A673 (cell line): ENCODE measurements at regions of chr16 and their contacts with region 1.

Region 1: GRCh38 chr16:24504472-24505345 is 34.7 kb upstream of the RBBP6 start:
- DNase-seq: peak; percentile 90
- H3K4me3 ChIP-seq: peak overlapping the region; percentile 10
- H3K27ac ChIP-seq: peak overlapping the region; percentile 20
- H3K4me1 ChIP-seq: peaks cover 26% of the 10 kb centered on the region
- H3K27me3 ChIP-seq: no peaks in the 10 kb centered on the region
- CTCF ChIP-seq: peak; percentile 83

Region 2: DNA sequence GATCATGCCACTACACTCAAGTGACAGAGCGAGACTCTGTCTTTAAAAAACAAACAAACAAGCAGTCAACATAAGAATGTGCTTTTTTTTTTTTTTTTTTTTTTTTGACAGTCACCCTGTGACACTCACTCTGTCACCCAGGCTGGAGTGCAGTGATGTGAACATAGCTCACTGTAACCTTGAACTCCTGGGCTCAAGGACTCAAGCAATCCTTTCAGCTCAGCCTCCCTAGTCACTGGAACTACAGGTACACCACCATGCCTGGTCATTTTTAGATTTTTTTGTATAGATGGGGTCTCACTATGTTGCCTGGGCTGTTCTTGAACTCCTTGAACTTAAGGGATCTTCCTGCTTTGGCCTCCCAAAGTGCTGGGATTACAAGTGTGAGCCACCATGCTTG is 765.2 kb before region 1 on chr16:
- CTCF ChIA-PET with region 1: no interaction called
- POLR2A ChIA-PET with region 1: no interaction called
- intact Hi-C with region 1: loop called (anchors 5 kb)
- DNase-seq: no peak
- H3K4me3 ChIP-seq: no peak overlapping the region
- H3K27ac ChIP-seq: no peak overlapping the region
- H3K4me1 ChIP-seq: peaks cover 9% of the 10 kb centered on the region
- H3K27me3 ChIP-seq: no peaks in the 10 kb centered on the region
- CTCF ChIP-seq: no peak

Region 3: GRCh38 chr16:24041826-24042631 is 462.7 kb before region 1 on chr16:
- CTCF ChIA-PET with region 1: interaction called, 21 read pairs
- POLR2A ChIA-PET with region 1: no interaction called
- intact Hi-C with region 1: loop called (anchors 1 kb)
- DNase-seq: peak; percentile 87
- H3K4me3 ChIP-seq: no peak overlapping the region
- H3K27ac ChIP-seq: no peak overlapping the region
- H3K4me1 ChIP-seq: peaks cover 23% of the 10 kb centered on the region
- H3K27me3 ChIP-seq: no peaks in the 10 kb centered on the region
- CTCF ChIP-seq: peak; percentile 86

Region 4: GRCh38 chr16:24070851-24071250 is 433.9 kb before region 1 on chr16:
- CTCF ChIA-PET with region 1: interaction called, 16 read pairs
- POLR2A ChIA-PET with region 1: no interaction called
- intact Hi-C with region 1: no loop called
- DNase-seq: peak; percentile 89
- H3K4me3 ChIP-seq: no peak overlapping the region
- H3K27ac ChIP-seq: no peak overlapping the region
- H3K4me1 ChIP-seq: peaks cover 8% of the 10 kb centered on the region
- H3K27me3 ChIP-seq: no peaks in the 10 kb centered on the region
- CTCF ChIP-seq: peak; percentile 83

Region 5: GRCh38 chr16:24471561-24472350 is 33.0 kb before region 1 on chr16:
- CTCF ChIA-PET with region 1: no interaction called
- POLR2A ChIA-PET with region 1: no interaction called
- intact Hi-C with region 1: no loop called
- DNase-seq: peak; percentile 55
- H3K4me3 ChIP-seq: no peak overlapping the region
- H3K27ac ChIP-seq: no peak overlapping the region
- H3K4me1 ChIP-seq: peaks cover 13% of the 10 kb centered on the region
- H3K27me3 ChIP-seq: no peaks in the 10 kb centered on the region
- CTCF ChIP-seq: no peak

Region 6: DNA sequence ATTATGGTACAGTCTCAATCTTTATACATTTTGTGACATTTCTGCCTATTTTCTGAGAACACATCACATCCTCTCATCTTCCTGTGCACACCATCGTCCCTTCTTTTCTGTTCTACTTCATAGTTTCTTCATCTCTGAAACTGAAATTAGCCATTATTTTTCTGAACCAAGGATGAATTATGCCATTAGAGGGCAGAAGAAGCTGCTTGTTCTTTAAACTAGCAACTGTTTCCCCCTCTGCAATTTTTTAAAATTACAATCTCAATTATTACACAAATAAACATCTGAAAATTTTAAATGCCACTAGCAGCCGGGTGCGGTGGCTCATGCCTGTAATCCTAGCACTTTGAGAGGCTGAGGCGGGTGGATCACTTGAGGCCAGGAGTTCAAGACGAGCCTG is 76.0 kb after region 1 on chr16:
- CTCF ChIA-PET with region 1: no interaction called
- POLR2A ChIA-PET with region 1: no interaction called
- intact Hi-C with region 1: no loop called
- DNase-seq: peak; percentile 18
- H3K4me3 ChIP-seq: no peak overlapping the region
- H3K27ac ChIP-seq: no peak overlapping the region
- H3K4me1 ChIP-seq: no peaks in the 10 kb centered on the region
- H3K27me3 ChIP-seq: no peaks in the 10 kb centered on the region
- CTCF ChIP-seq: peak; percentile 50